Caco-2 (cell line): ENCODE measurements at regions of chr20 and their contacts with region 1.

Region 1: GRCh38 chr20:49768204-49769047 is 44.2 kb upstream of the SLC9A8 start:
- DNase-seq: peak; percentile 95 to 96
- H3K4me3 ChIP-seq: no peak overlapping the region
- H3K4me3 Mint-ChIP-seq: peak overlapping the region; percentile 57
- H3K27ac Mint-ChIP-seq: peak overlapping the region; percentile 93
- H3K4me1 ChIP-seq: peaks cover 57% of the 10 kb centered on the region
- H3K4me1 Mint-ChIP-seq: peaks cover 33% of the 10 kb centered on the region
- H3K27me3 ChIP-seq: no peaks in the 10 kb centered on the region
- H3K27me3 Mint-ChIP-seq: no peaks in the 10 kb centered on the region
- CTCF ChIP-seq: no peak

Region 2: GRCh38 chr20:49785852-49786175 is 17.4 kb after region 1 on chr20:
- CTCF ChIA-PET with region 1: interaction called, 4 read pairs
- POLR2A ChIA-PET with region 1: no interaction called
- intact Hi-C with region 1: loop called (anchors 1 kb)
- DNase-seq: no peak
- H3K4me3 ChIP-seq: no peak overlapping the region
- H3K4me3 Mint-ChIP-seq: no peak overlapping the region
- H3K27ac Mint-ChIP-seq: no peak overlapping the region
- H3K4me1 ChIP-seq: peaks cover 23% of the 10 kb centered on the region
- H3K4me1 Mint-ChIP-seq: peaks cover 11% of the 10 kb centered on the region
- H3K27me3 ChIP-seq: no peaks in the 10 kb centered on the region
- H3K27me3 Mint-ChIP-seq: no peaks in the 10 kb centered on the region
- CTCF ChIP-seq: no peak

Region 3: GRCh38 chr20:49812463-49813304 is 44.3 kb after region 1 on chr20 and contains the start of gene SLC9A8:
- CTCF ChIA-PET with region 1: interaction called, 4 read pairs
- POLR2A ChIA-PET with region 1: interaction called, 4 read pairs
- intact Hi-C with region 1: loop called (anchors 1 kb)
- DNase-seq: peak; percentile 97 to 98
- H3K4me3 ChIP-seq: peak within 1 kb of the TSS; percentile 68
- H3K4me3 Mint-ChIP-seq: peak within 1 kb of the TSS; percentile 97
- H3K27ac Mint-ChIP-seq: peak within 1 kb of the TSS; percentile 96
- H3K4me1 ChIP-seq: peaks cover 25% of the 10 kb centered on the region
- H3K4me1 Mint-ChIP-seq: peaks cover 41% of the 10 kb centered on the region
- H3K27me3 ChIP-seq: no peaks in the 10 kb centered on the region
- H3K27me3 Mint-ChIP-seq: no peaks in the 10 kb centered on the region
- CTCF ChIP-seq: peak; percentile 38 to 44
- total RNA-seq, gene SLC9A8: 19.5 and 21.4 TPM in 2 replicates

Region 4: DNA sequence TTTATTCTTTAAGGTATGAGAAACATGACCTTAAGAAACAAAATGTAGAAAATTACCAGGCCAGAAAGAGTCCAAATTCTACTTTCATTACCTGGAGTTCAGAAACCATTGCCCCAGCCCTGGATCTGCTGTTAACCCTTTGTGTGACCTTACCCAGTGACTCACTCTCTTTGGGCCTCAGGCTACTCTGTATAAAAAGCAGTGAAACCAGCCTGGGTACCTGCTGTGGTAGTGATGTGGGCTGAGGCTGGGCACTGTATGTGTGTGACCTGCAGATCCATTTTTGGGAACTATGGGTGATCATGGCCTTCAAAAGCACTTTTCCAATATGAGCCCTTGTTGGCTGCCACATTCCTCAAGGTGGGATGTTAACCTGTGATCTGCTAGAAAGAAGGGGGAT is 91.4 kb after region 1 on chr20:
- CTCF ChIA-PET with region 1: interaction called, 4 read pairs
- POLR2A ChIA-PET with region 1: no interaction called
- intact Hi-C with region 1: loop called (anchors 1 kb)
- DNase-seq: peak in 1 of 2 experiments; percentile 40
- H3K4me3 ChIP-seq: no peak overlapping the region
- H3K4me3 Mint-ChIP-seq: no peak overlapping the region
- H3K27ac Mint-ChIP-seq: no peak overlapping the region
- H3K4me1 ChIP-seq: no peaks in the 10 kb centered on the region
- H3K4me1 Mint-ChIP-seq: no peaks in the 10 kb centered on the region
- H3K27me3 ChIP-seq: no peaks in the 10 kb centered on the region
- H3K27me3 Mint-ChIP-seq: no peaks in the 10 kb centered on the region
- CTCF ChIP-seq: no peak